Activated T-helper 2 cell treated with anti-CD3 and anti-CD28 coated beads, Interferon-gamma antibody, Interleukin-2, Interleukin-4, amounts not matched to agents 10 μg/mL and 5 μg/mL and 100 μg/mL, durations not matched to agents 14 hours and 24 hours and 36 hours (primary cell): ENCODE measurements at regions of chr4 and their contacts with region 1.

Region 1: GRCh38 chr4:118173956-118174725 is 139.9 kb downstream of the NDST3 start:
- DNase-seq: no peak
- H3K4me3 Mint-ChIP-seq: no peak overlapping the region
- H3K27ac Mint-ChIP-seq: peak overlapping the region; percentile 77
- H3K4me1 Mint-ChIP-seq: peaks cover 48% of the 10 kb centered on the region
- H3K27me3 Mint-ChIP-seq: peaks cover 5% of the 10 kb centered on the region

Region 2: DNA sequence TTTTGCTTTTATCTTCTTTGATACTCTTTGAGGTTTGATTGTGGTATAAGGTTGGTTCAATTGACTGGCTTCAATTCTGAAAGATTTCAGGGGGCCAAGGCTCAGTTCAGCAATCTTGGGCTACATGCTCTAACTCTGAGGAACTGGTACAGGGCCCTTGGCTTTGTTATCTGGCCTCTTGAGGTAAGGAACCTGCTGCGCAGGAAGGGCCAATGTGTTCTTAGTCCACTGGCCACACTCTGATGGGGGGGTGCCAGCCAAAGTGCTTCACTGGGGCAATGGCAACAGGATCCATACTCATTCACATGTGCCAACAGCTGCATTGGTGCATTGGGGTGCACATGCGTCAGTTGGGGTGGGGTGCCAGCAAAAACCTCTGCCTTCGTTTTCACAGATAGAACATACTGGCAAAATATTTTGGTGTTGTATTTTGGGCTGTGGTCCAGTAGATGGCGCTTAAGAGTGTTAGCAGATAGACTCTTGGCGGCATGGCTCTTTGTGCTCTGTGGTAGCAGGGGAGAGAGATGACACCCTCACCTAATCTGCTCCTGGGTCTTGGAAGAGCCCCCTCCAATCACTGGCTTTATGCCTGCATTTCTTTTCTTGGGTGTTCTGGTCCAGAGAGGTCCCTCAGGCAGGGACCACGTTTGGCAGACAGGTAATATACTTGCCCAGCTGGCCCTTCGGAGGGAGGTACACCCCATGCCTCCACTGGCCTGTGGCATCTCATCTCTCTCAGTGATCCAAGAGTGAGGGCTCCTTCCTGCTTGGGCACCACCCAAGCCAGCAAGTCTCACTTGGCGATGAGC is 97.0 kb before region 1 on chr4:
- intact Hi-C with region 1: loop called (anchors 2 kb)
- DNase-seq: no peak
- H3K4me3 Mint-ChIP-seq: no peak overlapping the region
- H3K27ac Mint-ChIP-seq: no peak overlapping the region
- H3K4me1 Mint-ChIP-seq: peaks cover 12% of the 10 kb centered on the region
- H3K27me3 Mint-ChIP-seq: peaks cover 7% of the 10 kb centered on the region

Region 3: GRCh38 chr4:118086344-118086743 is 87.8 kb before region 1 on chr4:
- intact Hi-C with region 1: loop called (anchors 1 kb)
- DNase-seq: no peak
- H3K4me3 Mint-ChIP-seq: no peak overlapping the region
- H3K27ac Mint-ChIP-seq: no peak overlapping the region
- H3K4me1 Mint-ChIP-seq: peaks cover 10% of the 10 kb centered on the region
- H3K27me3 Mint-ChIP-seq: peaks cover 2% of the 10 kb centered on the region

Region 4: GRCh38 chr4:118113220-118113619 is 60.9 kb before region 1 on chr4:
- intact Hi-C with region 1: loop called (anchors 5 kb)
- DNase-seq: no peak
- H3K4me3 Mint-ChIP-seq: no peak overlapping the region
- H3K27ac Mint-ChIP-seq: no peak overlapping the region
- H3K4me1 Mint-ChIP-seq: peaks cover 22% of the 10 kb centered on the region
- H3K27me3 Mint-ChIP-seq: no peaks in the 10 kb centered on the region

Region 5: DNA sequence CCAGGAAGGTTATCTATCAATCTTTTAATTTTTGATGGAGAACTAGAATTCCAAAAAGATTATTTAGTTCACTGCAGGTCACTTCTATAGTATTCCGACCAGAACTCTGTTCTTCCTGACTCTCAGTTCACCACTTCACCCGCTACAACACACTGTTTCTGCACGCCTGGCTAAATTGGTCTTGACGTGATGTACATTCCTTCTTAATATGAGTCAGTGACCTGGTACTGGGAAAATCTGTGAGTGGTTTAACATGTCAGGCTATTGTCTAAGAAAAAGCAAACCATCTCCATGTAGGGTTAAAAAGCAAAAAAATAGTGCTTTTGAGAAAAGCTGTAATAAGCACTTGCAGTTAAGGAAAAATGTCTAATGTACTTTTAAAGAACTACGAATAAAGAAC is 19.5 kb before region 1 on chr4:
- intact Hi-C with region 1: loop called (anchors 1 kb)
- DNase-seq: no peak
- H3K4me3 Mint-ChIP-seq: no peak overlapping the region
- H3K27ac Mint-ChIP-seq: no peak overlapping the region
- H3K4me1 Mint-ChIP-seq: peaks cover 17% of the 10 kb centered on the region
- H3K27me3 Mint-ChIP-seq: no peaks in the 10 kb centered on the region

Region 6: DNA sequence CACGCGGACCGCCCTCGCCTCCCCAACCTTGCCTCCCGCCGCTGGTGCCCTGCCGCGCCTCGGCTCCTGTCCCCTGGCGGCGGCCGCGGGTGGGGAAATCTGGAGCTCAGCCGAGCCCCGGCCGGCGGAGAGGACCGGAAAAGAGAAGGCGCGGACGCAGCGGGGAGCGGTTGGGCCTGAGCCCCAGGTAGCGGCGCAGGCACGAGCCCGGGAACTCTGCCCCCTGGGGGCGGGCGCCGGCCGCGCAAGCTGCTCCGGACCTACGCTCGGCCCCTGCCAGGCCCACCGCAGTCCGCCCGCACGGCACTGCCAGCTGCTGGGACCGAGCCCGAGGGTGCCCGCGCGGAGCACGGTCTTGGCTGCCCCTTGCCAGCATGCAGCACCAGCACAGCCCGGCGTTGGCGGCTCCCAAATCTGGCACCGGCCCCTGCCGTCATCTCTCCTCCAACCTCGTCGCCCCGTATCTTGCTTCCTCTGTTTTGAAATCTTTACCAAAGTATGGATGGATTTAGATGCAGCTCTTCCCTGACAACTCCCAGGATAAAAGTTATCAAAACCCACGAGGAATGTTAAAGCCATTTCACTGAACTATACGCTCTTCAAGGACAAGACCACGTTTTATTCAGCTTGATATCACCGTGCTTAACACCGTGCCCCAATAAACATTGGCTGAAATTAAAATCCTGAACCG is 178.8 kb after region 1 on chr4 and contains the start of gene PRSS12:
- intact Hi-C with region 1: no loop called
- DNase-seq: peak; percentile 56
- H3K4me3 Mint-ChIP-seq: peak within 1 kb of the TSS; percentile 76
- H3K27ac Mint-ChIP-seq: no peak within 1 kb of the TSS
- H3K4me1 Mint-ChIP-seq: peaks cover 11% of the 10 kb centered on the region
- H3K27me3 Mint-ChIP-seq: peaks cover 68% of the 10 kb centered on the region
- total RNA-seq, gene PRSS12: not detected in 2 replicates